ENCODE measurements at regions of chr3 and their contacts with region 1.

Region 1: DNA sequence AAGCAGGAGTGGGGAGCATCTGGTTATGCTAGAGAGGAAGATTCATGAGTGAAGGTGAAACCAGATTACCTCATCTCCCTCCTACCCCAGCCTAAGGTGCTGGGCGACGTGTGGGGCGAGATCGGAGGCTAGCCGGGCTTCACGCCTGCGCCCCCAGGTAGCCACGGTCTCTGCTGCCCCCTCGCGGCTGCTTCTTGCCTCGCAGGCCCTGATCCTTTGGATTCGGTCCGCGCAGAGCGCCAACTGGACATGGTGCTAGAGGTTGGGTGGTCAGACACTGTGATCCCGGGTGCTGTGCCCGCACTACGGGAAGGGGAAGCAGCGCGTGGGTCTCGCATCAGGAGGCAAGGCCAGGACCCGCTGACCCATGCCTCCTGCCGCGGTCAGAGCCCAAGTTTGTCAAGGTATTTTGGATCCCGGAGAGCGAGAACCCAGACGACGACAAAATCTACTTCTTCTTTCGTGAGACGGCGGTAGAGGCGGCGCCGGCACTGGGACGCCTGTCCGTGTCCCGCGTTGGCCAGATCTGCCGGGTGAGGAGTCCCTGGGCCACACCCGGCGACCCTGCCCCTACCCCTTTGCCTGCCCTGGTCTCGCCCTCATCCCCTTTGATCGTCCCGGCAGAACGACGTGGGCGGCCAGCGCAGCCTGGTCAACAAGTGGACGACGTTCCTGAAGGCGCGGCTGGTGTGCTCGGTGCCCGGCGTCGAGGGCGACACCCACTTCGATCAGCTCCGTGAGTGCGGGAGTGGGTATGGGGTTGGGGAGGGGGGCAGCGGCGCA is 4.2 kb downstream of the SEMA3B start:
- DNase-seq: peak; percentile 81 to 95 (median 94)
- ATAC-seq: peak; percentile 58 to 63
- H3K4me3 ChIP-seq: no peak overlapping the region
- H3K27ac ChIP-seq: no peak overlapping the region
- H3K4me1 ChIP-seq: peaks cover 2% of the 10 kb centered on the region
- H3K27me3 ChIP-seq: no peaks in the 10 kb centered on the region

Region 2: GRCh38 chr3:50121416-50122032 is 151.6 kb before region 1 on chr3:
- intact Hi-C with region 1: loop called in 2 of 4 experiments (anchors 10 kb)
- DNase-seq: peak; percentile 81 to 88 (median 85)
- ATAC-seq: peak; percentile 82
- H3K4me3 ChIP-seq: no peak overlapping the region
- H3K27ac ChIP-seq: no peak overlapping the region
- H3K4me1 ChIP-seq: no peaks in the 10 kb centered on the region
- H3K27me3 ChIP-seq: no peaks in the 10 kb centered on the region